ENCODE measurements at regions of chr2 and their contacts with region 1.

Region 1: DNA sequence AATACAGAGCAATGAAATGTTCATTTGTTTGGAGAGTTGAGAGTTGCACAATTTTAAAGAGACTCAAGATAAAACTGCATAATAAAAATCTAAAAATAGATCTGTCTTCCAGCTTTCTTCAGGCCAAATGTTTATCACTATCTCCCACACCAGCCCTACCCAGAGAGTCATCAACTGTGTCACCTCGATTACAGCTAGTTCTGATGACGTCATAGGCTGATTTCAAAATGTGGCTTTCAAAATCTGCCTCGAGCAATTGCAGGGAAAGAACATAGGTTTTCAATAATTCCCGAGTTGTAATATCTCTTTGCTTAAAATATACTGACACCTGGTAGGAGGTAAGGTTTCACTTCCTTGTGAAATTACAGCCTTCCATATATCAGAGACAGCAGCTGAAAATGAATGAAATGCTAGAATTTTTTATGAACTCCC is 677.6 kb upstream of the ID2 start:
- DNase-seq: peak; percentile 84
- H3K4me3 ChIP-seq: peak overlapping the region in 2 of 4 donors; percentile 8 to 22
- H3K27ac ChIP-seq: peak overlapping the region; percentile 58 to 84 (median 77)
- H3K4me1 ChIP-seq: peaks cover 0 to 18% (median 14%) of the 10 kb centered on the region in 4 donors
- H3K27me3 ChIP-seq: no peaks in the 10 kb centered on the region
- CTCF ChIP-seq: no peak
- EP300 ChIP-seq: peak in 3 of 4 donors; percentile 18 to 83 (median 62)
- POLR2A ChIP-seq: no peak

Region 2: GRCh38 chr2:7950035-7950612 is 54.1 kb before region 1 on chr2:
- intact Hi-C with region 1: no loop called
- DNase-seq: no peak
- H3K4me3 ChIP-seq: no peak overlapping the region
- H3K27ac ChIP-seq: no peak overlapping the region
- H3K4me1 ChIP-seq: peaks cover 0 to 6% (median 1%) of the 10 kb centered on the region in 4 donors
- H3K27me3 ChIP-seq: no peaks in the 10 kb centered on the region
- CTCF ChIP-seq: no peak
- EP300 ChIP-seq: no peak
- POLR2A ChIP-seq: no peak

Region 3: DNA sequence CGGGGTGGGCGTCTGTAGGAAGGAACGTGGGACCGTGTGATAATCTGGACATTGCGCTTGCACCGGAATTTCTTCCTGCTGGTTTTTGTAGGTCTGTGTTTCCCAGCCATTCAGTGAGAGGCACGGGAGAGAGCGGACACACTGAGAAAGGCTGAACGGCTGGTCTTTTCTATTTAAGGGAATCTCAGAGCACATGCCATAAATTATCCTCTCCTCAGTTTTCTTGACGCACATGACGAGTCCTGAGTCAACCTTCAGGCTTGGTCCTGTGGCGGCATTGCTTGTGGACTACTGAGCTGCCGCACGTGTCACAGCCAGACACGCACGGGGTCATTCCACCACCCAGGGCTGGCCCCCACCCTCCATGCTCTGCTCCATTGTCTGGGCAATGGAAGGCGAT is 158.3 kb after region 1 on chr2:
- intact Hi-C with region 1: loop called (anchors 5 kb)
- DNase-seq: peak; percentile 94
- H3K4me3 ChIP-seq: no peak overlapping the region
- H3K27ac ChIP-seq: peak overlapping the region; percentile 21 to 85 (median 82)
- H3K4me1 ChIP-seq: peaks cover 0 to 36% (median 18%) of the 10 kb centered on the region in 4 donors
- H3K27me3 ChIP-seq: no peaks in the 10 kb centered on the region
- CTCF ChIP-seq: no peak
- EP300 ChIP-seq: peak; percentile 78 to 88 (median 82)
- POLR2A ChIP-seq: no peak

Region 4: DNA sequence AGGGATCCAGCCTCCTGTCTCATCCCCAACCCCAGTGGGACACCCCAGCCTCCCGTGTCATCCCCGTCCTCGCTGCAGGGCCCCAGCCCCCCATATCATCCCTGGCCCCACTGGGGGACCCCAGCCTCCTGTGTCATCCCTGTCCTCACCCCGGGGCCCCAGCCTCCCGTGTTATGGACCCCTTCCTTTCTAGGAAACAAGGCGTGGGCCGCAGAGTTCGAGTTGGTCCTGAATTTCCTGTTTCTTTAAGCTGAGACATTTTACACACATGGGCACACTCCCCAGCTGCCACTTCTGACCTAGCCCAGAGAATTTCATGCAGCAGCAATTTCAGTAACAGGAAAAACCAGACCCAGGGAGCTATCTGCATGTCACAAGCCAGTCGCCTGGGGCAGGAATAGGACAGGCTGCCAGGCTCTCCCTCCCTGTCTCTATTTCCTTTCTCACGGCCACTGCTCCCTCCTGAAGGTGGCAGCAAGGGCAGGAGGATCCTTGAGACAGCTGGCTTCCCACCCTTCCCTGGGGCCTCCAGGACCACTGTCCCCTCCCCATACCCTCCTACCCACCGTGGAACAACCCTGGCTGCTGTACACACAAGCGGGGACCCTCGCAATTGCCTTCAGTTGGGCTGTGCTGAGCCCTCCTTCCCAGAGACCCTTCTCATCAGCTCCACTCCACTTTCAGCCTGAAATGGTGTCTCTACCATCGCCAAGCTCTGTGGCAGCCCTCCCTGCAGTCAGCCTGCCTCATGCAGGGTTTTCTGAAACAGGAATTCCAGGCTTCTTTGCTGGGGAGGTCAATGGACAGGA is 535.7 kb after region 1 on chr2:
- intact Hi-C with region 1: loop called (anchors 10 kb)
- DNase-seq: no peak
- H3K4me3 ChIP-seq: no peak overlapping the region
- H3K27ac ChIP-seq: peak overlapping the region in 1 of 4 donors; percentile 42
- H3K4me1 ChIP-seq: peaks cover 0 to 40% (median 26%) of the 10 kb centered on the region in 4 donors
- H3K27me3 ChIP-seq: no peaks in the 10 kb centered on the region
- CTCF ChIP-seq: no peak
- EP300 ChIP-seq: no peak
- POLR2A ChIP-seq: no peak